CD8-positive, alpha-beta T cell (primary cell): ENCODE measurements at regions of chr11 and their contacts with region 1.

Region 1: GRCh38 chr11:102457865-102458264 is 5.3 kb upstream of the TMEM123 start:
- DNase-seq: no peak
- ATAC-seq: no peak
- H3K4me3 ChIP-seq: no peak overlapping the region
- H3K4me3 Mint-ChIP-seq: no peak overlapping the region
- H3K27ac ChIP-seq: no peak overlapping the region
- H3K27ac Mint-ChIP-seq: no peak overlapping the region
- H3K4me1 ChIP-seq: peaks cover 45% of the 10 kb centered on the region
- H3K4me1 Mint-ChIP-seq: peaks cover 55% of the 10 kb centered on the region
- H3K27me3 ChIP-seq: no peaks in the 10 kb centered on the region
- H3K27me3 Mint-ChIP-seq: no peaks in the 10 kb centered on the region
- CTCF ChIP-seq: no peak

Region 2: DNA sequence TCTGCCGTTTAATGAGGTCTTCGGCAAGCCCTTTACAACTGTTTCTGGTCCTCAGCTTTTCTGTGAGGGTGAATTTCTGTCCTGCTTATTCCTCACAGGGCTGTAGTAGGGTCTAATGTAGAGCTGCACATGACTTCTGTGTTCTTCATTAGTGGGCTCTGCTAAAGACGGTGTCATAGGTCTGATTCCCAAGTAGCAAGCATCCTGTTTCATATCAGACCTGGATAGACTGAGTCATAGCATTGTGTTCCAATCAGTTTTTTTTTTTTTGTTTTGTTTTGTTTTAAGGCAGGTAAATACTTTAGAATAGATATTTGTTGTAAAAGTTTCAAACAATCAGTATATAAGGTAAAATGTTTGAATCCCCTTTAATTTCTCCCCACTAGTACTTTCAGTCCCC is 75.5 kb before region 1 on chr11:
- CTCF ChIA-PET with region 1: no interaction called
- POLR2A ChIA-PET with region 1: no interaction called
- intact Hi-C with region 1: no loop called
- DNase-seq: no peak
- ATAC-seq: no peak
- H3K4me3 ChIP-seq: no peak overlapping the region
- H3K4me3 Mint-ChIP-seq: no peak overlapping the region
- H3K27ac ChIP-seq: no peak overlapping the region
- H3K27ac Mint-ChIP-seq: no peak overlapping the region
- H3K4me1 ChIP-seq: peaks cover 7% of the 10 kb centered on the region
- H3K4me1 Mint-ChIP-seq: peaks cover 26% of the 10 kb centered on the region
- H3K27me3 ChIP-seq: no peaks in the 10 kb centered on the region
- H3K27me3 Mint-ChIP-seq: no peaks in the 10 kb centered on the region
- CTCF ChIP-seq: no peak

Region 3: DNA sequence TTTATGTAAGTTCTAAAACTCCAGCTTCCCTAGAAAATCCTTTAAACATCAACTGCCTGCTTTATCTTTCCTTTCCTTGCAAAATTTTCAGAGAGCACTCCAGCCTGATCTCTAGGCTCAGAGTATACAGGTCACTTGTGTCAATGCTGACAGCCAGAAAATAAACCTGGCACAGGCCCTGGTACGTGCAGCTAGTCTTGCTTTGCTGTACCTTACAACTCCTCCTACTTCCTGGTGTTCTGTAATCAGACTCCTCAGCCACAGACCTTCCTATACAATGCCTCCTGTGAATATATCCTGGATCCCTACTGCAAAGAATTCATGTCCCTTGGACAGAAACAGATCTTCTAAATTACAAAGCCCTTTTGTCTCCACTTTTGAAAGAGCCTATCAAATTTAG is 18.9 kb after region 1 on chr11:
- CTCF ChIA-PET with region 1: interaction called, 5 read pairs
- POLR2A ChIA-PET with region 1: interaction called, 7 read pairs
- intact Hi-C with region 1: loop called in 1 of 2 experiments (anchors 2 kb)
- DNase-seq: peak in 5 of 9 experiments; percentile 21 to 60 (median 36)
- ATAC-seq: peak; percentile 92
- H3K4me3 ChIP-seq: no peak overlapping the region
- H3K4me3 Mint-ChIP-seq: peak overlapping the region; percentile 10
- H3K27ac ChIP-seq: peak overlapping the region in 1 of 2 experiments; percentile 3
- H3K27ac Mint-ChIP-seq: peak overlapping the region; percentile 92
- H3K4me1 ChIP-seq: peaks cover 34% of the 10 kb centered on the region
- H3K4me1 Mint-ChIP-seq: peaks cover 58% of the 10 kb centered on the region
- H3K27me3 ChIP-seq: no peaks in the 10 kb centered on the region
- H3K27me3 Mint-ChIP-seq: no peaks in the 10 kb centered on the region
- CTCF ChIP-seq: no peak